MCF 10A (cell line): ENCODE measurements at regions of chr9 and their contacts with region 1.

Region 1: GRCh38 chr9:121322037-121322775 is 47.8 kb downstream of the STOM start:
- DNase-seq: peak; percentile 97
- H3K4me3 Mint-ChIP-seq: peak overlapping the region; percentile 7
- H3K27ac Mint-ChIP-seq: peak overlapping the region; percentile 100
- H3K4me1 Mint-ChIP-seq: peaks cover 43% of the 10 kb centered on the region
- H3K27me3 Mint-ChIP-seq: no peaks in the 10 kb centered on the region
- CTCF ChIP-seq: no peak

Region 2: GRCh38 chr9:121267689-121268597 is 54.3 kb before region 1 on chr9 and contains the start of gene GSN:
- CTCF ChIA-PET with region 1: interaction called, 19 read pairs
- POLR2A ChIA-PET with region 1: interaction called, 5 read pairs
- intact Hi-C with region 1: no loop called
- DNase-seq: peak; percentile 49
- H3K4me3 Mint-ChIP-seq: peak within 1 kb of the TSS; percentile 75
- H3K27ac Mint-ChIP-seq: peak within 1 kb of the TSS; percentile 80
- H3K4me1 Mint-ChIP-seq: peaks cover 18% of the 10 kb centered on the region
- H3K27me3 Mint-ChIP-seq: no peaks in the 10 kb centered on the region
- CTCF ChIP-seq: no peak
- total RNA-seq, gene GSN: 21.9 and 24.9 TPM in 2 replicates

Region 3: GRCh38 chr9:121298689-121299466 is 23.3 kb before region 1 on chr9:
- CTCF ChIA-PET with region 1: interaction called, 18 read pairs
- POLR2A ChIA-PET with region 1: no interaction called
- intact Hi-C with region 1: no loop called
- DNase-seq: no peak
- H3K4me3 Mint-ChIP-seq: no peak overlapping the region
- H3K27ac Mint-ChIP-seq: no peak overlapping the region
- H3K4me1 Mint-ChIP-seq: peaks cover 12% of the 10 kb centered on the region
- H3K27me3 Mint-ChIP-seq: no peaks in the 10 kb centered on the region
- CTCF ChIP-seq: no peak

Region 4: DNA sequence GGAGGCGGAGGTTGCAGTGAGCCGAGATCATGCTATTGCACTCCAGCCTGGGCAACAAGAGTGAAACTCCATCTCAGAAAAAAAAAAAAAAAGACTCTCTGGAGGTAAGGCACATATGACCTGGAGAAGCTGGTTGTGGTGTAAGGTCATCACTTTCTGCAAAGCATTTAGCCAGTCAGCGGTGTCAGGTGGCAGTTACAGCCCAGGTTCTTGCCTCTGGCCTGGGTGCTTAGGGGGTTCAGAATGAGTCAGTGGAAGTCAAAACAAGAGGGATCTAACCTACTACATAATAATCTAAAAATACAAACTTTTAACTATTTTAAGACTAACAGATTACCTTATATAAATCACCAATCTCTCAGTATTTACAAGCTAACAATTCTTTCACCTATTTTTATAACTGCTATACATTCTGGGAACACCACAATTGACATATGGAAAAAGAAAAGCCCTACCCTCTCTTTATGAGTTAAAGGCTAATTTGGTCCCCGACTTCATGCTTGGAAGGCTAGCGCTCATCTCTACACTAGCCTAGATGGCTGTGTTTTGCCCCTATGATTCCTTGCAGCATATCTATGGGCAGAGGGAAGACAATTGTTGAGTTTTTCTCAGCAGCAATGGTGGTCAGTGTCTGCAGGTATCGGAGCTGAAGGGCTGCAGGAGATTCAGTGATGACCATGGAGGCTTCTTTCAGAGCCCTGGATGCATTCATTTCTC is 18.6 kb after region 1 on chr9:
- CTCF ChIA-PET with region 1: interaction called, 15 read pairs
- POLR2A ChIA-PET with region 1: interaction called, 9 read pairs
- intact Hi-C with region 1: no loop called
- DNase-seq: no peak
- H3K4me3 Mint-ChIP-seq: no peak overlapping the region
- H3K27ac Mint-ChIP-seq: peak overlapping the region; percentile 31
- H3K4me1 Mint-ChIP-seq: peaks cover 17% of the 10 kb centered on the region
- H3K27me3 Mint-ChIP-seq: no peaks in the 10 kb centered on the region
- CTCF ChIP-seq: no peak

Region 5: GRCh38 chr9:121369595-121370265 is 47.5 kb after region 1 on chr9 and contains the start of gene STOM:
- CTCF ChIA-PET with region 1: interaction called, 133 read pairs
- POLR2A ChIA-PET with region 1: interaction called, 96 read pairs
- intact Hi-C with region 1: no loop called
- DNase-seq: peak; percentile 91
- H3K4me3 Mint-ChIP-seq: peak within 1 kb of the TSS; percentile 86
- H3K27ac Mint-ChIP-seq: peak within 1 kb of the TSS; percentile 92
- H3K4me1 Mint-ChIP-seq: peaks cover 48% of the 10 kb centered on the region
- H3K27me3 Mint-ChIP-seq: no peaks in the 10 kb centered on the region
- CTCF ChIP-seq: no peak
- total RNA-seq, gene STOM: 200 and 231 TPM in 2 replicates

Region 6: DNA sequence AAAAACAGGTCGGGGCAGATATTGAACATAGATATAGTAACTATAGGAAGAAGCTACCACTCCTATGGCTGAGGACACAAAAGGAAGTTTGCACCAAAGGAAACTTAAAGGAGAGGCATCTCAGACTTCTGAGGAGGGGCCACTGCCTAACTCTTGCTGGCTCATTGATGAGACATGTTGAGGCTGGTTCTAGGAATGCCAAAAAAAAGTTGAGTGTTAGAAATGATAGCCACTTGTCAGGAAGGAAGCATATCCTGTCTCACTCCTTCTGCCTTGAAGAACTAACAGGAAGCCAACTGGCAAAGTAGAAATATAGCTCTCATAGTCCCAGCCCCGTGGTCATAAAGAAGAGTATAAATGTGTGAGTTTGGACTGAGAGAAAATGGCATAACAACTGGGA is 71.1 kb after region 1 on chr9:
- CTCF ChIA-PET with region 1: interaction called, 152 read pairs
- POLR2A ChIA-PET with region 1: interaction called, 37 read pairs
- intact Hi-C with region 1: no loop called
- DNase-seq: peak; percentile 43
- H3K4me3 Mint-ChIP-seq: no peak overlapping the region
- H3K27ac Mint-ChIP-seq: peak overlapping the region; percentile 83
- H3K4me1 Mint-ChIP-seq: peaks cover 18% of the 10 kb centered on the region
- H3K27me3 Mint-ChIP-seq: no peaks in the 10 kb centered on the region
- CTCF ChIP-seq: no peak

Region 7: GRCh38 chr9:121427899-121428298 is 105.7 kb after region 1 on chr9:
- CTCF ChIA-PET with region 1: no interaction called
- POLR2A ChIA-PET with region 1: no interaction called
- intact Hi-C with region 1: no loop called
- DNase-seq: no peak
- H3K4me3 Mint-ChIP-seq: no peak overlapping the region
- H3K27ac Mint-ChIP-seq: no peak overlapping the region
- H3K4me1 Mint-ChIP-seq: no peaks in the 10 kb centered on the region
- H3K27me3 Mint-ChIP-seq: no peaks in the 10 kb centered on the region
- CTCF ChIP-seq: no peak